ENCODE measurements at regions of chr20 and their contacts with region 1.

Region 1: DNA sequence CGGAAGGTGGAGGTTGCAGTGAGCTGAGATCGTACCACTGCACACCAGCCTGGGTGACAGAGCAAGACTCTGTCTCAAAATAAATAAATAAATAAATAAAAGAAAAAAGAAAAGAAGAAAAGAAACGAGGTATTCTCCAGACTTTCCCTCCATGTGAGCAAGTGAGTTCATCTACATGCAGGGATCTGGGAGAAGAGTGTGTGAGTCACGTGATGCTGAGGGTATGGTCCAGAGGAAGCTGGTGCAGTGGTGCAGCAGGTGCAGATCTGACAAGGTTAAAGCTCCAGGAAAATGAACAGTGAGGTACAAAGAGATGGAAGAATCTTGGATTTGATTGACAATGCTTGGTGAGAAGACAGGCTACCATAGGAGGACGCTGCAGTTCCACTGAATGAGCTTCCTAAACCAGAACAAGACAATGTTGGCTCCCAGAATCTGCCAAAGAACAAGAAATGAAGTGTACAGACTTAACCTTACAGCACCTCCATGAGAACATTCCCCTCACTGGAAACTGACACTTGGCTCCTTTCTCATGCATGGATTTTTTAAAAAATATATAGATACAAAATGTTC is 79.5 kb upstream of the BTBD3 start:
- DNase-seq: no peak
- H3K4me3 ChIP-seq: no peak overlapping the region
- H3K27me3 ChIP-seq: no peaks in the 10 kb centered on the region
- CTCF ChIP-seq: no peak

Region 2: GRCh38 chr20:11654766-11655165 is 183.4 kb before region 1 on chr20:
- CTCF ChIA-PET with region 1: no interaction called
- POLR2A ChIA-PET with region 1: no interaction called
- DNase-seq: no peak
- H3K4me3 ChIP-seq: no peak overlapping the region
- H3K27me3 ChIP-seq: no peaks in the 10 kb centered on the region
- CTCF ChIP-seq: no peak

Region 3: GRCh38 chr20:11826334-11826733 is 11.8 kb before region 1 on chr20:
- CTCF ChIA-PET with region 1: no interaction called
- POLR2A ChIA-PET with region 1: interaction called, 22 read pairs
- DNase-seq: no peak
- H3K4me3 ChIP-seq: no peak overlapping the region
- H3K27me3 ChIP-seq: no peaks in the 10 kb centered on the region
- CTCF ChIP-seq: no peak

Measured in BJ (cell line).